Activated CD4-positive, alpha-beta T cell treated with anti-CD3 and anti-CD28 coated beads for 36 hours (primary cell): ENCODE measurements at regions of chr3 and their contacts with region 1.

Region 1: DNA sequence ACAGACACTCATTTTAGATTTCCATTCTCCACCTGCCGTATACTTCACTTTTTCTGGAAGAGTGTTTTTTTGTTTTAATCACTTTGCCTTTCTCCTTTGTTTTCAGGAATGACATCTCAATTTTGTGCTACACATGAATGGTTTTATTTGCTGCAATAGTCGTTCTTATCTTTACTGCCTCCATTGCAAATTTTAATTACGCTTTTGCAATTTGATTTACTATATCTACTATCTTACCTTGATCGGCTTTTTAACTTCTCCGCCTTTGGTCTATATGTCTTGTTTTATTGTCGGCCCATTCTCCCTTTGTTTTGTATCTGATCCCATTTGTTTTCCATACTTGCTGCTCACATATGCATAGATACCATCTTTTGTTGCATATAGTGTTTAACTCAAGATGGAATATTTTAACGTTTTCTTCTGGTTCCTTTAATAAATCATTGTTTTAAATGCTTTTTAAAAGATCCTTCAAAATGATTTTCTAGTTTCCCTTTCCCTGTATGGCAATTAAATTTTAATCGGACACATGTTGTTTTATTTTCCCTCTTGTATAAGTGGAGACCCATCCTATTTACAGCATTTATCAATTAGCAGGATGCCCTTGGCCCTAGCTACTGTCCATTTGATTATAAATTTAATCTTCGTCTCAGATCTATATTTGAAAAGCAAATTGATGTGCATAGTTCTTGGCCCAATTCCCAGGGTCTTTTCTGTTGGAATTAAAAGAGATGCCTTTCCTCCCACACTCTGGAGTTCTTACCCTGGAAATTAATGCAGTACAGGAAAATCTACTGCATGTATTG is 97.2 kb upstream of the CNTN4 start:
- DNase-seq: no peak
- ATAC-seq: no peak
- H3K4me3 Mint-ChIP-seq: no peak overlapping the region
- H3K27ac Mint-ChIP-seq: no peak overlapping the region
- H3K4me1 Mint-ChIP-seq: no peaks in the 10 kb centered on the region
- H3K27me3 Mint-ChIP-seq: no peaks in the 10 kb centered on the region

Region 2: DNA sequence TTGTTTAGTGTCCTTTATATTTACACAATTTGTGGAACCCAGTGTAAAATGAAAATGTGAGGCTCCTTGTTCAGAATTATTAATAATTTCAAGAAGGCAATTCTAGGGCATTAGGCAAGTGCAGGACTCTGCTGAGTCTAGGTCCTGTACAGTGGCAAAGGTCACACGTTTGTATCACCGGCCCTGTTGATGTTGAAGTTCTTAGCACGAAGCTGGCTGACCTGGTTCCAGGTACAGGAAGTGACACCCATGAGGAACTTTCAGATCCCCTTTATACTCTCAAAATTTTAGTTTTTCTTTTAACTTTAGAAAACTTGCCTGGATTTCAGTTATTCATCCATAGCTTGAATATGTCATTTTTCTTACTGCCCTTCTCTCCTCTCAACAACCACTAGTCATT is 559.2 kb before region 1 on chr3:
- CTCF ChIA-PET with region 1: no interaction called
- POLR2A ChIA-PET with region 1: no interaction called
- intact Hi-C with region 1: no loop called
- DNase-seq: no peak
- ATAC-seq: no peak
- H3K4me3 Mint-ChIP-seq: no peak overlapping the region
- H3K27ac Mint-ChIP-seq: no peak overlapping the region
- H3K4me1 Mint-ChIP-seq: no peaks in the 10 kb centered on the region
- H3K27me3 Mint-ChIP-seq: no peaks in the 10 kb centered on the region

Region 3: GRCh38 chr3:1848935-1849334 is 152.6 kb before region 1 on chr3:
- CTCF ChIA-PET with region 1: no interaction called
- POLR2A ChIA-PET with region 1: no interaction called
- intact Hi-C with region 1: no loop called
- DNase-seq: no peak
- ATAC-seq: no peak
- H3K4me3 Mint-ChIP-seq: no peak overlapping the region
- H3K27ac Mint-ChIP-seq: no peak overlapping the region
- H3K4me1 Mint-ChIP-seq: no peaks in the 10 kb centered on the region
- H3K27me3 Mint-ChIP-seq: no peaks in the 10 kb centered on the region

Region 4: DNA sequence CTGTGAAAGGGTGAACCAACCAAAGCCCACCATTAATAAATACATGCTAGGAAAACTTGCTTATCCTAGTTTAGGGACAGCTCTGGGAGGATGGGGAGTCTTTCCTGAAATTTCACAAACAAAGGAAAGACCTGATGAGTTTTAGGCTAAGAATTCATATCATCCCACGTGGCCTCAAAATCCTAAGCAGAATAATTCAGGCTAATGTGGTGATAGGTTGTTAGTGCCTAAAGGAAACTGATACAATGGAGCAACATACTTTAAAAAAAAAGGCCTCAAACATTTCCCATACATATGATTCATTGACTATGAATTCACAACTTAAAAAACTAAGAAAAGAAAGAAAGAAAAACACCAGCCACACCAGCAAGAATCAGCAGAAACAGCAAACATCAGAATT is 29.7 kb before region 1 on chr3:
- CTCF ChIA-PET with region 1: no interaction called
- POLR2A ChIA-PET with region 1: no interaction called
- intact Hi-C with region 1: loop called in 1 of 2 experiments (anchors 1 kb)
- DNase-seq: no peak
- ATAC-seq: no peak
- H3K4me3 Mint-ChIP-seq: no peak overlapping the region
- H3K27ac Mint-ChIP-seq: no peak overlapping the region
- H3K4me1 Mint-ChIP-seq: no peaks in the 10 kb centered on the region
- H3K27me3 Mint-ChIP-seq: no peaks in the 10 kb centered on the region